ENCODE measurements at regions of chr14 and their contacts with region 1.

Region 1: DNA sequence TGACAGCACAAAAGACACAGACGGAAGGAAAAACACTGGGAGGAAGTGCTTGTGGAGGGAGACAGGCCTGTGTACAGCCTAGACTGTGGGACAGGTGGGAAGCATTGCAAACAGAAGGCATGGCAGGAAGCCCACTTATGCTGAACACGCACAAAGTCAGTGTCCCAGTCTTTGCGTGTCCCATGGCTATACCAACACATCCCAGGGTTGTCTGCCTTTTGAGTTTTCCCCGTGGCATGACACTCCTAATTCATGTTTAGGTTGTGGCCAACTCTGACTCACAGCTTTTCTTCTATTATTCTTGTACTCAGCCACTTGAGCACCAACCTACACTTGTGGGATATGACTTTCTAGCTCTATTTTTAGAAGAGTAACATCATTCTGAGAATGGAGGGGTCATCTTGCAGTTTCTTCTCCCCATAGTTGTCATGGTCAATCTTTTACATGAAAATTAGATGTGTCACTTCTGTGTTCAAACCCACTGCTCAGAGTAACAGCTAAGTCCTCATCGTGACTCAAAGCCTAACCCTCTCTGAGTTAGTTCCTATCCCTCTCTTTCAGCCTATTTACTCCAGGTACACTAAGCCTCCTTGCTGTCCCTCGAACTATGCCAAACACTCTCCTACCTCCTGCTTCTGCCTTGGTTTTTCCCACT is 27.5 kb upstream of the JPH4 start:
- DNase-seq: no peak
- H3K4me3 ChIP-seq: no peak overlapping the region
- H3K4me3 Mint-ChIP-seq: no peak overlapping the region
- H3K27ac ChIP-seq: no peak overlapping the region
- H3K27ac Mint-ChIP-seq: peak overlapping the region in 2 of 8 donors; percentile 17 to 49
- H3K4me1 ChIP-seq: peaks cover 23% of the 10 kb centered on the region
- H3K4me1 Mint-ChIP-seq: peaks cover 21 to 25% (median 24%) of the 10 kb centered on the region in 3 donors
- H3K27me3 ChIP-seq: no peaks in the 10 kb centered on the region
- H3K27me3 Mint-ChIP-seq: peaks cover 5% of the 10 kb centered on the region in 2 donors

Region 2: DNA sequence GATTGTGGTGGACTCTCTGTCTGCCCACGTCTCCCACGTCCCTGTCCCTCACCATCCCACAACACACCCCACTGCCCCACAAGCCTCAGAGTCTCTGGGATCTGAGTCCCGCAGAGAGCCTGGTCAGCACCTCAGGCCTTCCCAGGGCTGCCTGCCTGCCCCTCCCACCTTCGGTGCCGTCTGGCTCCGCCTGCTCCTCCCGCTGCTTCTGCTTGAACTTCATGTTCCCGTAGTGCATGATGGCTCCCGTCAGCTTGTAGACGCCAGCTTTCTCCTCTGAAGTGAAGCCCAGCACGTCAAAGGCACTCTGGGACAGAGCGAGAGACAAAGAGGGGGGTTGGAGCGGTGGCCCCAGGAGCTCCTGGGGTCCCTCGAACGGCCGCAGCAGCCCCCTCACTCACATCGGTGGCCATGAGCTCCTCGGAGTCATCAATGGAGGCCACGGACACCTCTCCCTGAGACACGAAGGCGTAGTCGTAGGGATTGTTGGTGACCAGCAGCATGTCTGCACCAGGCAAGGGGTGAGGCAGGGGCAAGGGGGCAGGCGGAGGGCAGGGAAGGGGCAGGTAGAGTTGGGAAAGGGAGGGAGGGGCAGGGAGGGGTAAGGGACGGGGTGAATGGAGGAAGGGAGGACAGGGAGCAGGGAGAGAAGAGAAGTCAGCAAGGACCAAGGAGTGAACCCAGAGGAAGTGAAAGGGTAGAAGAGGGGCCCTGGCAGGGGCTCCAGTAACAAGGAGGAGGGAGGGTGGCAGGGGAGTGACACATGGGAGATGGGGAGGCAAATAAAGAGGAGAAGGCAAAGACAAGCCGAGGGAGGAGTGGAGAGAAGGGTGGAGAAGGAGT is 203.5 kb before region 1 on chr14:
- CTCF ChIA-PET with region 1: no interaction called
- POLR2A ChIA-PET with region 1: no interaction called
- DNase-seq: no peak
- H3K4me3 ChIP-seq: no peak overlapping the region
- H3K4me3 Mint-ChIP-seq: no peak overlapping the region
- H3K27ac ChIP-seq: no peak overlapping the region
- H3K27ac Mint-ChIP-seq: no peak overlapping the region
- H3K4me1 ChIP-seq: no peaks in the 10 kb centered on the region
- H3K4me1 Mint-ChIP-seq: no peaks in the 10 kb centered on the region
- H3K27me3 ChIP-seq: no peaks in the 10 kb centered on the region
- H3K27me3 Mint-ChIP-seq: peaks cover 4 to 36% of the 10 kb centered on the region in 2 donors

Region 3: GRCh38 chr14:23537351-23538049 is 68.6 kb before region 1 on chr14:
- CTCF ChIA-PET with region 1: no interaction called
- POLR2A ChIA-PET with region 1: no interaction called
- DNase-seq: peak in 1 of 5 donors; percentile 14
- H3K4me3 ChIP-seq: no peak overlapping the region
- H3K4me3 Mint-ChIP-seq: no peak overlapping the region
- H3K27ac ChIP-seq: no peak overlapping the region
- H3K27ac Mint-ChIP-seq: peak overlapping the region in 1 of 8 donors; percentile 81
- H3K4me1 ChIP-seq: no peaks in the 10 kb centered on the region
- H3K4me1 Mint-ChIP-seq: no peaks in the 10 kb centered on the region
- H3K27me3 ChIP-seq: no peaks in the 10 kb centered on the region
- H3K27me3 Mint-ChIP-seq: peaks cover 3% of the 10 kb centered on the region in 2 donors

Region 4: DNA sequence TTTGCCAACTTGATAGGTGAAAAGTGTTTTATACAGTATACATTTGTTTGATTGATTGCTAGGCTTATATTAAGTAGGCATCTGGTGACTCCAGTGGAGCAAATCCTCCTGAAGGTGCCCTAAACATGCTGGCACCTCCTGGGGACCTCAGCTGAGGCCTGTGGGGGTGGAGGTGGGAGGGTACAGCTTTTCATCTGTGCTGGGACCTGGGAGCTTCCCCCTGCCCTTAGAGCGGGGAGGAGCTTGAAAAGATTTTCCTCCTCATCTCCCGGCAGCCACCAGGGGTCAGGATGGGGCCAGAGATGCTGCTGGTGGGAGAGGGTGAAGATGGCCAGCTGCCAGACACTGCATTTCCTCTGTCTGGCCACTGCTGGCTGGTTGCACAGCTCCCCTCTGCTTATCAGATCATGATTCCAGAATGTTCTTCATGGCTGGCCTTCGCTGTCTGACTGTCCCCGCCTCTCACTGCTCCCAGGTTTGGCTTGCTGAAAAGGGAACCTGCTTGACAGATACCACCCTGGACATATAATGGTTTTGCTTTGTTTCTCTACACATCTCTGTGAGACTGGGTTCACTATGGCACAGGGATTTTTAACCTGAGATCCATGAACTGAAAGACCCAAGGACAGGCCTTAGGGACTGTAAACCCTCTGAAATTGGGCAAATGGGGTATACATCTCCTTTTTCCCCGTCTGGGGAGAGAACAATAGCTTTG is 17.0 kb before region 1 on chr14:
- CTCF ChIA-PET with region 1: interaction called, 28 read pairs
- POLR2A ChIA-PET with region 1: no interaction called
- DNase-seq: peak; percentile 65 to 86 (median 76)
- H3K4me3 ChIP-seq: no peak overlapping the region
- H3K4me3 Mint-ChIP-seq: peak overlapping the region in 1 of 7 donors; percentile 20
- H3K27ac ChIP-seq: no peak overlapping the region
- H3K27ac Mint-ChIP-seq: peak overlapping the region in 2 of 8 donors; percentile 58 to 60
- H3K4me1 ChIP-seq: peaks cover 9% of the 10 kb centered on the region
- H3K4me1 Mint-ChIP-seq: peaks cover 3 to 8% (median 7%) of the 10 kb centered on the region in 3 donors
- H3K27me3 ChIP-seq: no peaks in the 10 kb centered on the region
- H3K27me3 Mint-ChIP-seq: peaks cover 13 to 22% of the 10 kb centered on the region in 2 donors

Measured in CD8-positive, alpha-beta memory T cell (primary cell).